ENCODE measurements at regions of chr11 and their contacts with region 1.

Region 1: GRCh38 chr11:64846998-64847666 is 2.7 kb upstream of the CDC42BPG start:
- DNase-seq: peak; percentile 79 to 96 (median 89)
- ATAC-seq: peak; percentile 78
- H3K4me3 ChIP-seq: no peak overlapping the region
- H3K4me3 Mint-ChIP-seq: peak overlapping the region in 7 of 10 donors; percentile 14 to 55 (median 38)
- H3K27ac ChIP-seq: no peak overlapping the region
- H3K27ac Mint-ChIP-seq: peak overlapping the region; percentile 21 to 83 (median 72)
- H3K4me1 ChIP-seq: peaks cover 41 to 59% of the 10 kb centered on the region in 2 donors
- H3K4me1 Mint-ChIP-seq: peaks cover 40 to 68% (median 58%) of the 10 kb centered on the region in 7 donors
- H3K27me3 ChIP-seq: no peaks in the 10 kb centered on the region
- H3K27me3 Mint-ChIP-seq: no peaks in the 10 kb centered on the region

Region 2: DNA sequence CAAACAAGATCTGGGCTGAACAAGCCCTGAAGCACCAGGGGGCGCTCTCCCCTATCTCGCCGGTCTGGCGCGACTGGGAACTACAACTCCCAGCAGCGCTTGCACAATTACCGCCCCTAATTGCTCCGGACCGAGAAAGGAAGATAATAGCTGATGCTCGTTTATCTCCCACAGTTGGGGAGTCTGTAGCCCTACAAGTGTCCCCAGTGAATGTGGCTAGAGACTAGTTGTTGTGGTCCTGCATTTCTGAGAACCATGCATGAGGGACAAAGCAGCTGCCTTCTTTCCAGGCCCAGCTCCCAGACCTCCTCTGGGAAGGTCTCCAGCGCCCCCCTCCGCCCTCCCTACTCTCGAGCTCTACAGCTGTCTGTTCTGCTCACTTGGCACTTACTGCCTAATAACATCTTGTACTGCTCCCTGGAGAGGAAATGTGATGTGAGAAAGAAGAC is 158.6 kb before region 1 on chr11:
- CTCF ChIA-PET with region 1: interaction called, 6 read pairs
- POLR2A ChIA-PET with region 1: interaction called, 3 read pairs
- intact Hi-C with region 1: loop called in 1 of 2 experiments (anchors 1 kb)
- DNase-seq: peak; percentile 76 to 91 (median 86)
- ATAC-seq: peak; percentile 99
- H3K4me3 ChIP-seq: peak overlapping the region; percentile 53
- H3K4me3 Mint-ChIP-seq: peak overlapping the region; percentile 30 to 76 (median 58)
- H3K27ac ChIP-seq: no peak overlapping the region
- H3K27ac Mint-ChIP-seq: peak overlapping the region in 5 of 9 donors; percentile 13 to 80 (median 25)
- H3K4me1 ChIP-seq: peaks cover 6 to 7% of the 10 kb centered on the region in 2 donors
- H3K4me1 Mint-ChIP-seq: peaks cover 9 to 29% (median 23%) of the 10 kb centered on the region in 7 donors
- H3K27me3 ChIP-seq: peaks cover under 1 to 2% of the 10 kb centered on the region in 2 donors
- H3K27me3 Mint-ChIP-seq: peaks cover 16 to 40% (median 18%) of the 10 kb centered on the region in 5 donors

Region 3: DNA sequence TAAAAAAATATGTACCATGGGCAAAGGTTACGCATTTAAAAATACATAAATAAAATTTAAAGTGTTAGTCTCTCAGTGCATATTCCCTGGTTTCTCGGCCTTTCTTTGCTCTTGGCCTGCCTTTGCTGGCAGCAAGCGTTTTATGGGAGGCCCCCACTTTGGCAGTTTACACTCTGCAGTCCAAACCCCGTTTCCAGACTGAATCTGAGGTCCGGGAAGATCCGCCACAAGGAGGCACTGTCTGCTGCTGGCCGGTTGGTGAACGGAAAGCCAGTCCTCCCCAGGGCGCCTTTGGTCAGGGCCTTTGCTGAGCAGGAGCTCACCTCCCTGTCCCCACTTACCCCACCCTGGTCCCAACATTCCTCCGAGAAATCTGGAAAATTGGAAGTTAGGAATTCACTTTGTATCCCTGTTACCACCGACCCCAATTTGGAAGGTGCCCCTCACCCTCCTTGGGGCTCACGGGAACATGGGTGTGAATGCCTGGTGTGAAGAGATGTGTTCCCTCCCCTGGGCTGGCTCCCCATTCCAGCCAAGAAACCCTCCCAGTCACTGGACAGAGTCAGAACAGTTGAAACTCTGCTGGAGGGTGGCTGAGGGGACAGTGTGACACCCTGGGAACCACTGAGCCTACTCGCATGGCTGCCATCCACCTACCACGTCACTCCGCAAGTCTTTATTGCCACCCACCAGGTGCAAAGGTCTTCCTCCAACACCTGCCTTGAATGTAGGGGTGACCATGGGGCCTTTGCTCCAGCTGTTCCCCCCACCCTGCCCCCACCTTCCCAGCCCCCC is 59.4 kb before region 1 on chr11:
- CTCF ChIA-PET with region 1: interaction called, 7 read pairs
- POLR2A ChIA-PET with region 1: no interaction called
- intact Hi-C with region 1: loop called in 1 of 2 experiments (anchors 2 kb)
- DNase-seq: peak in 8 of 9 donors; percentile 28 to 65 (median 54)
- ATAC-seq: peak; percentile 90
- H3K4me3 ChIP-seq: no peak overlapping the region
- H3K4me3 Mint-ChIP-seq: no peak overlapping the region
- H3K27ac ChIP-seq: peak overlapping the region; percentile 16
- H3K27ac Mint-ChIP-seq: peak overlapping the region; percentile 18 to 90 (median 74)
- H3K4me1 ChIP-seq: peaks cover 0 to 7% of the 10 kb centered on the region in 2 donors
- H3K4me1 Mint-ChIP-seq: peaks cover 1 to 11% (median 5%) of the 10 kb centered on the region in 7 donors
- H3K27me3 ChIP-seq: no peaks in the 10 kb centered on the region
- H3K27me3 Mint-ChIP-seq: no peaks in the 10 kb centered on the region

Region 4: GRCh38 chr11:64864473-64865285 is 17.5 kb after region 1 on chr11:
- CTCF ChIA-PET with region 1: interaction called, 280 read pairs
- POLR2A ChIA-PET with region 1: interaction called, 457 read pairs
- intact Hi-C with region 1: loop called (anchors 1 kb)
- DNase-seq: peak in 1 of 9 donors; percentile 63
- ATAC-seq: no peak
- H3K4me3 ChIP-seq: peak overlapping the region; percentile 45
- H3K4me3 Mint-ChIP-seq: peak overlapping the region; percentile 45 to 91 (median 78)
- H3K27ac ChIP-seq: peak overlapping the region; percentile 76
- H3K27ac Mint-ChIP-seq: peak overlapping the region; percentile 89 to 98 (median 96)
- H3K4me1 ChIP-seq: peaks cover 86 to 98% of the 10 kb centered on the region in 2 donors
- H3K4me1 Mint-ChIP-seq: peaks cover 68 to 94% (median 82%) of the 10 kb centered on the region in 7 donors
- H3K27me3 ChIP-seq: no peaks in the 10 kb centered on the region
- H3K27me3 Mint-ChIP-seq: no peaks in the 10 kb centered on the region

Region 5: DNA sequence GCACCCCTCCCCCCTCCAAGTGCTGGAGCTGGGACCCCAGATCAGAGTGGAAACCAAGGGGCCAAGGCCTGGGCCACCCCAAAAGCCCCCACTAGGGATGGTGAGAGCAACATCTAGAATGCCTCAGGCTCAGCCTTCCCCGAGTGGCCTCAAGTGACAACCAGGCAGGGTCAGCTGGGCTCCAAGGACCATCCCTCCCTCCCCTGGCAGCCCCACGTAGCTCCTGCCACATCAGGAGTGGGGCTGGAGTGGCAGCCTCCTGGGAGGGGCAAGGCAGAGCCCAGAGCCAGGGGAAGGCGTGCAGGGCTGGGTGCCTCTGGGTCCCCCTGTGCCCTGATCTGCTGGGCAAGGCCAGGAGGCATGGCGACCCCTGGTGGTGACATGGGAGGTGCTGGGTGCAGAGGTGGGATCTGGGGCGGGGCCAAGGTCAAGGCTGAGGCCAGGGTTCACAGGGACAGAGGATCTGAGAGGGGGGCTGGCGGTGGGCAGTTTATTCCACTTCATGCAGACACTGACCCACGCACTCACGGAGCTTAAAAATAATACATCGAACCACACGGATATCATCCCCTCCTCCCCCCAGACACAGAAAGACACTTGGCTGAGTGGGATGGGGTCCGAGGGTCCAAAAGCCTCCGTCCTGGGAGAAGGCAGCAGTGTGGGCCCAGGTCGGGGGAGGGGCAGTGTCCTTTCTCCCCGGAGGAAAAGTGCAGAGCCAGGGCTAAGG is 47.1 kb after region 1 on chr11:
- CTCF ChIA-PET with region 1: interaction called, 945 read pairs
- POLR2A ChIA-PET with region 1: interaction called, 1,324 read pairs
- intact Hi-C with region 1: loop called (anchors 1 kb)
- DNase-seq: peak; percentile 75 to 93 (median 87)
- ATAC-seq: peak; percentile 89
- H3K4me3 ChIP-seq: no peak overlapping the region
- H3K4me3 Mint-ChIP-seq: peak overlapping the region in 1 of 10 donors; percentile 21
- H3K27ac ChIP-seq: no peak overlapping the region
- H3K27ac Mint-ChIP-seq: peak overlapping the region in 2 of 9 donors; percentile 45 to 75
- H3K4me1 ChIP-seq: peaks cover 0 to 6% of the 10 kb centered on the region in 2 donors
- H3K4me1 Mint-ChIP-seq: peaks cover 0 to 6% (median 0%) of the 10 kb centered on the region in 7 donors
- H3K27me3 ChIP-seq: no peaks in the 10 kb centered on the region
- H3K27me3 Mint-ChIP-seq: no peaks in the 10 kb centered on the region

Region 6: DNA sequence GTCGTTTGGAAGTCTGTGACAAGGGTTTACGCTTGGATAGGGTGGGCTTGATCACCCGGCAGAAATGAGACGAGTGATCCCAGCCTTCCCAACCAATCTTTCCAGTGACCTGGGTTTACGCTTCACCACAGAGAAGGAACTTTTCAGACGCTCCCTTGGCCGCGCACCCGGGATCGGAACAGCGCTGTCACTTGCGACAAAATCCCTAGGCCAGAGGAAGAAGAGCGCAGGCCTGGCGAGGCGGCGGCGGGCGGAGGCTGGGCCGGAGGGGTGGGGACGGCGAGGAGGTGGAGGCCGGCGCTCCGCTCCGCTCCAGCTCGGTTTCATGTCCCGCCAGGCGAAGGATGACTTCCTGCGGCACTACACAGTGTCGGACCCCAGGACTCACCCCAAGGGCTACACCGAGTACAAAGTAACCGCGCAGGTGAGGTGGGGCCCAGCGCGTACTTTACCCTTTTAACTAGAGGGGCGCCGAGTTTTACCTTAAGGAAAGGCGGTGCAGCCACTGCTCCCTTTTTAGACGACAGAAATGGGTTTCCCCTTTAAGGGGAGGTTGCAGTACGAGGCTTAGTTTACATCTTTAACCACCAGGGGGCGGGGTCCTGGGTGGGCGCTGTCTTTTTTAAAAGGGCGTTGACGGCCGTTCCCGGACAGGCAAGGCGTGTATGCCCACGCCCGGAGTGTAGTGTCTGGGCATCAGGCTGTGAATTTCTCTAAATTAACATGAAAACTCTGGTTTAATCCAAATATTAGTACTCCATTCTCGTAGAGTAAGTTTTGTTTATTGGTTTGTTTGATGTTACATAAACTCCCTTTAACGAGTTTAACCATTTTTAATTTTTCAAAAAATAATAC is 180.3 kb after region 1 on chr11 and contains the start of gene SNX15:
- CTCF ChIA-PET with region 1: no interaction called
- POLR2A ChIA-PET with region 1: no interaction called
- intact Hi-C with region 1: loop called in 1 of 2 experiments (anchors 1 kb)
- DNase-seq: peak; percentile 61 to 95 (median 94)
- ATAC-seq: peak; percentile 97
- H3K4me3 ChIP-seq: peak within 1 kb of the TSS; percentile 41
- H3K4me3 Mint-ChIP-seq: peak within 1 kb of the TSS; percentile 66 to 91 (median 83)
- H3K27ac ChIP-seq: peak within 1 kb of the TSS; percentile 59
- H3K27ac Mint-ChIP-seq: peak within 1 kb of the TSS; percentile 59 to 95 (median 87)
- H3K4me1 ChIP-seq: peaks cover 9 to 14% of the 10 kb centered on the region in 2 donors
- H3K4me1 Mint-ChIP-seq: peaks cover 12 to 24% (median 21%) of the 10 kb centered on the region in 7 donors
- H3K27me3 ChIP-seq: no peaks in the 10 kb centered on the region
- H3K27me3 Mint-ChIP-seq: no peaks in the 10 kb centered on the region
- total RNA-seq, gene SNX15: 13.1 to 29.0 (median 21.7) TPM

Region 7: DNA sequence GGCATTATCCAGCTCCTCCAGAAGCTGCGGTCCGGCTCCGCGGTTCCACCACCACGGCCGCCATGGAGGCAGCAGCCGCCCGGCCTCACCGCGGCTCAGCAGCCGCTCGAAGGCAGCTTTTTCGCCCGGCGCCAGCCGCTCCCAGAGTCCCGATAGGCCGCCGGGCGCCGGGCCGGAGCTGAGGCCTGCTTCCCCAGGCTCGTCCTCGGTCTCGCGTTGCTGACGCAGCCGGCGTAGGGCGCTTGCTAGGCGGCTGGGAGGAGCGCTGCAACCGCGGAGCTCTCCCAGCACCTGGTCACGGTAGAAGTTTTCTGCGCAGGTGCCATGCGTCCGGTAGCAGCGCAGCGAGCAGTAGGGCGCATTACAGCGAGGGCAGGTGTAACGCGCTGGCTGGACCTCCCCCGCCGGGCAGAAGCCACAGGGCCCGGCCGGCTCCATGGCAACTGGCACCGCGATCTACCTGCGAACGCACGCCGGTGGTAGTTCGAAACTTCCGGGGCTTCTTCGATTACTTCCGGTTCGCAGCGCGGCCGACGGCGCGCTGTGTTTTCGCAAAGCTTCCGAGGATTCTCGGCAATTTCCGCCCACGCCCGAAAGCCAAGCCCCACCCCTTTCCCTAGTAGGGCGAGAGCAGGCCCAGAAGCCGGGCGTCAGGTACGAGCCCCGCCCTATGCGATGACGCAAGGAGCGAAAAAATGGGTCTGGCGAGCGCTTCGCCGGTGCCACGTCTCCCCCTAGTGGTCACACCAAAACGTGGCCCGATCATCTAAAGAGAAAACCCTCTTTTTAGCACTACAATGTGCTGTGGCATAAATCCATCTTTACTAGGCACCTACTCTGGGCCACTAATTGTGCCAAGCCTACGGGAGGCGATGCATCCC is 270.3 kb after region 1 on chr11 and contains the start of gene ZNHIT2:
- CTCF ChIA-PET with region 1: no interaction called
- POLR2A ChIA-PET with region 1: interaction called, 13 read pairs
- intact Hi-C with region 1: loop called in 1 of 2 experiments (anchors 1 kb)
- DNase-seq: peak; percentile 94 to 100 (median 100)
- ATAC-seq: peak; percentile 85
- H3K4me3 ChIP-seq: peak within 1 kb of the TSS; percentile 92
- H3K4me3 Mint-ChIP-seq: peak within 1 kb of the TSS; percentile 91 to 95 (median 92)
- H3K27ac ChIP-seq: peak within 1 kb of the TSS; percentile 99
- H3K27ac Mint-ChIP-seq: peak within 1 kb of the TSS; percentile 86 to 100 (median 96)
- H3K4me1 ChIP-seq: peaks cover 28 to 37% of the 10 kb centered on the region in 2 donors
- H3K4me1 Mint-ChIP-seq: peaks cover 20 to 77% (median 53%) of the 10 kb centered on the region in 7 donors
- H3K27me3 ChIP-seq: no peaks in the 10 kb centered on the region
- H3K27me3 Mint-ChIP-seq: no peaks in the 10 kb centered on the region
- total RNA-seq, gene ZNHIT2: 9.9 to 18.2 (median 11.3) TPM

Region 8: DNA sequence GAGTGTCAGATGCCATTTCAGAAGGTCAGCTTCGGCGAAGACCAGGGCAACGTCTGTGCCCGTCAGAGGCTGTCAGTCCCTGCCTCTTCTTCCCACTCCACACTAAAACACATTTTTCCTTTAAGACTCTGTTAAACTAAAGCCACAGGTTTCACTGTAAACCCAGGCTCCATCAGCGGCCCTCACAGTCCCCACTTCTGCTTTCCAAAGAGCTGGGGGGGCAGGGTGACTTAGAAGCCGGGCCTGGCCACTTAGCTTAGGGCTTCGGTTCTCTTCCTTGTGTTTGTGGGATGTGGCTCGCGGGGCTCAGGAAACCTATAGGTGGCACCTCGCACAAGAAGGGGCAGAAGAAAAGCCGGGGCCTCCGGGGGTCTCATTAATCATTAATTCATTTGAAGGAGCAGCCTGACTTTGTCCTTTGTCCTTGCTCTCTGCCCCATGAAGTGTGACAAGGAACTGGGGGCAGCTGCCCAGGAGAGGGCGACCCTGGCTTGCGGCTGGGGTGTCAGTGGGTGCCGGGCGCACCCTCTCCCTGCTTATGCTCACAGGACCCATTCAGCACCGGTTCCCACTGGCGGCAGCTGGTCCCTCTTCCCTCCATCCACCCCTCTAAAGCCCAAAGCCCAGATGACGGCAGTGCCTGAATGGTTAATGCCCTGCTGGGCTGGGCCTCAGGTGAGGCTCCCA is 531.2 kb after region 1 on chr11:
- CTCF ChIA-PET with region 1: no interaction called
- POLR2A ChIA-PET with region 1: no interaction called
- intact Hi-C with region 1: no loop called
- DNase-seq: no peak
- ATAC-seq: no peak
- H3K4me3 ChIP-seq: no peak overlapping the region
- H3K4me3 Mint-ChIP-seq: no peak overlapping the region
- H3K27ac ChIP-seq: no peak overlapping the region
- H3K27ac Mint-ChIP-seq: peak overlapping the region in 2 of 9 donors; percentile 14 to 38
- H3K4me1 ChIP-seq: peaks cover 14% of the 10 kb centered on the region in 2 donors
- H3K4me1 Mint-ChIP-seq: peaks cover 12 to 27% (median 22%) of the 10 kb centered on the region in 7 donors
- H3K27me3 ChIP-seq: no peaks in the 10 kb centered on the region
- H3K27me3 Mint-ChIP-seq: no peaks in the 10 kb centered on the region

Measured in naive thymus-derived CD4-positive, alpha-beta T cell (primary cell).